Mammary epithelial cell (primary cell): ENCODE measurements at regions of chr4 and their contacts with region 1.

Region 1: GRCh38 chr4:71266090-71266794 is 72.6 kb upstream of the SLC4A4 start:
- DNase-seq: no peak
- H3K4me3 ChIP-seq: no peak overlapping the region
- H3K27ac ChIP-seq: no peak overlapping the region
- H3K4me1 ChIP-seq: no peaks in the 10 kb centered on the region
- H3K27me3 ChIP-seq: no peaks in the 10 kb centered on the region
- CTCF ChIP-seq: no peak

Region 2: GRCh38 chr4:71307729-71308128 is 41.5 kb after region 1 on chr4:
- CTCF ChIA-PET with region 1: no interaction called
- dilution Hi-C with region 1: loop called (anchors 5 kb)
- in situ Hi-C with region 1: no loop called
- intact Hi-C with region 1: no loop called
- DNase-seq: no peak
- H3K4me3 ChIP-seq: no peak overlapping the region
- H3K27ac ChIP-seq: no peak overlapping the region
- H3K4me1 ChIP-seq: no peaks in the 10 kb centered on the region
- H3K27me3 ChIP-seq: no peaks in the 10 kb centered on the region
- CTCF ChIP-seq: no peak